Activated CD8-positive, alpha-beta T cell treated with anti-CD3 and anti-CD28 coated beads for 36 hours (primary cell): ENCODE measurements at regions of chr2 and their contacts with region 1.

Region 1: GRCh38 chr2:136135921-136136906 is 18.3 kb upstream of the CXCR4 start:
- DNase-seq: peak; percentile 82
- ATAC-seq: peak; percentile 64
- H3K4me3 Mint-ChIP-seq: peak overlapping the region; percentile 30
- H3K27ac Mint-ChIP-seq: peak overlapping the region; percentile 78
- H3K4me1 Mint-ChIP-seq: peaks cover 93% of the 10 kb centered on the region
- H3K27me3 Mint-ChIP-seq: peaks cover 11% of the 10 kb centered on the region
- CTCF ChIP-seq: no peak

Region 2: DNA sequence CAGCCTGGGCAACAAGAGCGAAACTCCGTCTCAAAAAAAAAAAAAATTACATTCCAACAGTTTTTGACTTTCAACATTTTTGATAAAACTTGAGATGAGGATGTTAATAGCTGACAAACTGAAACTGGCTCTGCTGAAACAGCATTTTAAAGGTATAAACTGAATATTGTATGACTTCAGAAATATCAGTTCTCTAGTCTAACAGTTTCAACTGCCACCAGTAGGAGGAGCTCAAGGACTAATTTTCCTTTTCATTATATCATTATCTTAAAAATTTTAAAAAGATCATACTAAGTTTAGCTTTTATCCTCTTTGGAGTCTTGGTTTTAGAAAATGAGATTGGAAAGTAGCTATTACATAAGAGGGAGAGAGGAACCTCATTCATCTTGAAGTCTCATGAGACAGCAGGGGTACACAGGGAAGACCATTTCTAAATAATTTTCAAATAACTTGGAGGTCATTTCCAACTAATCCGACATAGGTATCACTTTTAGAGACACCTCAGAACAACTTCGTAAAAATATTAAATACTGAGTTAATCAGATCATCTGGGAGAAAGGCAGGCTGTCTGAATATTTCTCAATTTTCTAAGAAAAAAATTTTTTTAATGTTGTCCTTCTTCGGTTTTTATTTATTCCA is 222.4 kb before region 1 on chr2:
- CTCF ChIA-PET with region 1: interaction called, 8 read pairs
- POLR2A ChIA-PET with region 1: no interaction called
- intact Hi-C with region 1: loop called (anchors 5 kb)
- DNase-seq: peak; percentile 66
- ATAC-seq: peak; percentile 64
- H3K4me3 Mint-ChIP-seq: no peak overlapping the region
- H3K27ac Mint-ChIP-seq: peak overlapping the region; percentile 57
- H3K4me1 Mint-ChIP-seq: peaks cover 14% of the 10 kb centered on the region
- H3K27me3 Mint-ChIP-seq: no peaks in the 10 kb centered on the region
- CTCF ChIP-seq: peak; percentile 89

Region 3: GRCh38 chr2:136059036-136059472 is 77.2 kb before region 1 on chr2:
- CTCF ChIA-PET with region 1: interaction called, 4 read pairs
- POLR2A ChIA-PET with region 1: interaction called, 8 read pairs
- intact Hi-C with region 1: loop called (anchors 5 kb)
- DNase-seq: no peak
- ATAC-seq: no peak
- H3K4me3 Mint-ChIP-seq: no peak overlapping the region
- H3K27ac Mint-ChIP-seq: peak overlapping the region; percentile 13
- H3K4me1 Mint-ChIP-seq: peaks cover 53% of the 10 kb centered on the region
- H3K27me3 Mint-ChIP-seq: no peaks in the 10 kb centered on the region
- CTCF ChIP-seq: no peak

Region 4: DNA sequence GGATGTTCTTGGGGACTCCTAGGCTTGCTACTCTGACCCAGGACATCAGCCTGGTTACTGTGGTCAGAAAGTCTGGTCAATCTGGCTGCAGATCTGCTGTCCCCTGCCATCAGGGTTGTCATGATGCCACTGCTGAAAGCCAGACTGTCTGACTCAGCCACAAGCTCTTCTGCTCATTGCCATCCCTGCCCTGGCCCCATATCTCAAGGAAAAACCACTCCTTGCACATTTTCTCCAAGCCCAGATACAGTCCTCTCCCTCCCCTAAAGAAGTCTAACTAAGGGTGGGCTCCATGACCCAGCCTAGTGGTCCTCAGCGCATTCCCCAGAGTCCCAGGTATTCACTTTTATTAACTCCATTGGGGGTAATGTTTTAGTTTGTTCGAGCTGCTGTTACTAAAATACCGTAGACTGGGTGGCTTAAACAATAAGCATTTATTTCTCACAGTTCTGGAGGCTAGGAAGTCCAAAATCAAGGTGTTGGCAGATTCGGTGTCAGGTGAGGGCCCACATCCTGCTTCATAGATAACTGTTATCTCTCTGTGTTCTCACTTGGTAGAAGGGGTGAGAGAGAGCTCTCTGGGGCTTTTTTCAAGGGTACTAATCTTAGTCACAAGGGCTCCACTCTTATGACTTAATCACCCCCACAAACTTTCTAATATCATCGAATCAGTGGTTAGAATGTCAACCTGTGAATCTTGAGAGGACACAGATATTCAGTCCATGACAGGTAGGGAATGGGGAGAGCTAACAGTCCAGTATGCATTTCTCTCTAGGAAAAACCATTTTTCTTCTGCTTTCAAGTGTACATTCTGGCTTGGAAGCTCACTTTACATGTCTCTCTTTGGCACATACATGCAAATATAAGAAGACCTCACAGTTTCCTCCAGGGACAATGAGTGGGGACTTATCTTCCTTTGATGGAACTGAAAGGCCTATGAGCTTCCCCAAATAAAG is 76.5 kb after region 1 on chr2:
- CTCF ChIA-PET with region 1: interaction called, 3 read pairs
- POLR2A ChIA-PET with region 1: interaction called, 6 read pairs
- intact Hi-C with region 1: loop called (anchors 5 kb)
- DNase-seq: peak; percentile 68
- ATAC-seq: peak; percentile 94
- H3K4me3 Mint-ChIP-seq: no peak overlapping the region
- H3K27ac Mint-ChIP-seq: peak overlapping the region; percentile 60
- H3K4me1 Mint-ChIP-seq: peaks cover 45% of the 10 kb centered on the region
- H3K27me3 Mint-ChIP-seq: no peaks in the 10 kb centered on the region
- CTCF ChIP-seq: no peak

Region 5: GRCh38 chr2:136327162-136327852 is 191.1 kb after region 1 on chr2:
- CTCF ChIA-PET with region 1: no interaction called
- POLR2A ChIA-PET with region 1: interaction called, 4 read pairs
- intact Hi-C with region 1: loop called (anchors 5 kb)
- DNase-seq: peak; percentile 88
- ATAC-seq: peak; percentile 95
- H3K4me3 Mint-ChIP-seq: peak overlapping the region; percentile 44
- H3K27ac Mint-ChIP-seq: peak overlapping the region; percentile 83
- H3K4me1 Mint-ChIP-seq: peaks cover 58% of the 10 kb centered on the region
- H3K27me3 Mint-ChIP-seq: no peaks in the 10 kb centered on the region
- CTCF ChIP-seq: no peak

Region 6: GRCh38 chr2:136378712-136379595 is 242.7 kb after region 1 on chr2:
- CTCF ChIA-PET with region 1: interaction called, 11 read pairs
- POLR2A ChIA-PET with region 1: interaction called, 9 read pairs
- intact Hi-C with region 1: loop called (anchors 2 kb)
- DNase-seq: peak; percentile 86
- ATAC-seq: no peak
- H3K4me3 Mint-ChIP-seq: no peak overlapping the region
- H3K27ac Mint-ChIP-seq: no peak overlapping the region
- H3K4me1 Mint-ChIP-seq: peaks cover 82% of the 10 kb centered on the region
- H3K27me3 Mint-ChIP-seq: no peaks in the 10 kb centered on the region
- CTCF ChIP-seq: peak; percentile 90